KBM-7 (cell line): ENCODE measurements at regions of chr6 and their contacts with region 1.

Region 1: GRCh38 chr6:26537846-26538571 is at the start of gene HMGN4:
- DNase-seq: peak; percentile 96

Region 2: GRCh38 chr6:26327450-26328264 is 210.4 kb before region 1 on chr6:
- in situ Hi-C with region 1: loop called (anchors 25 kb)
- DNase-seq: peak; percentile 91

Region 3: DNA sequence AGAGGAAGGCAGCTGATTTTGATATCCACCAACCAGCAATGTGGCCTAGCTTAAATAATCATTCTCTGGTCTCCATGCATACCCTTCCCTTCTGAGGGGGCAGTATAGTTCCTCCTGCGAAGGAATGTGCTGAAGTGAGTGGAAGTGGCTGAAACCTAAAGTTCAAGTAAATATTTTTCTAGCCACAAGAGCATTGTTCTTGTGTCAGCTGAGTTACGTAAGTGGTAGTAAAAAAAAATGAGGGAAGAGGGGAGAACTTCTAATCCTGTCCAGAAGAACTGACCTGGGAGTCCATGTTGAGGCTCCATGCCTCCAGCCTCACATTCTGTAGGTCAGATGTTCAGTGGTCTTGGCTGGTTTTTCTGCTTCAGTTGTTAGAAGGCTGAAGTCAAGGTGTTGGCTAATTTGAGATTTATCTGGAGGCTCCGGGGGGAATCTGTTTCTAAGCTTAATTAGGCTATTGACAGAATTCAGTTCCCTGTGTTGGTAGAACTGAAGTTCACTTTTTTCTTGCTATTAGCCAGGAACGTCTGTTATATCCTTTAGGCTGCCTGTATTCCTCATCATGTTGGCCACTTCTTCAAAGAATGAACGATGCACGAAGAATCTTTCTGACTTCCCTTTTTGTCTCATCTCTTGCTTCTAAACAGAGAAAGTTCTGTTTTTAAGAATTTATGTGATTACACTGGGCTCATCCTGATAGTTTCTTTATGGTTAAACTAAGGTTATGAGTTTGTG is 502.4 kb after region 1 on chr6:
- in situ Hi-C with region 1: no loop called
- DNase-seq: no peak